ENCODE measurements at regions of chr3 and their contacts with region 1.

Region 1: DNA sequence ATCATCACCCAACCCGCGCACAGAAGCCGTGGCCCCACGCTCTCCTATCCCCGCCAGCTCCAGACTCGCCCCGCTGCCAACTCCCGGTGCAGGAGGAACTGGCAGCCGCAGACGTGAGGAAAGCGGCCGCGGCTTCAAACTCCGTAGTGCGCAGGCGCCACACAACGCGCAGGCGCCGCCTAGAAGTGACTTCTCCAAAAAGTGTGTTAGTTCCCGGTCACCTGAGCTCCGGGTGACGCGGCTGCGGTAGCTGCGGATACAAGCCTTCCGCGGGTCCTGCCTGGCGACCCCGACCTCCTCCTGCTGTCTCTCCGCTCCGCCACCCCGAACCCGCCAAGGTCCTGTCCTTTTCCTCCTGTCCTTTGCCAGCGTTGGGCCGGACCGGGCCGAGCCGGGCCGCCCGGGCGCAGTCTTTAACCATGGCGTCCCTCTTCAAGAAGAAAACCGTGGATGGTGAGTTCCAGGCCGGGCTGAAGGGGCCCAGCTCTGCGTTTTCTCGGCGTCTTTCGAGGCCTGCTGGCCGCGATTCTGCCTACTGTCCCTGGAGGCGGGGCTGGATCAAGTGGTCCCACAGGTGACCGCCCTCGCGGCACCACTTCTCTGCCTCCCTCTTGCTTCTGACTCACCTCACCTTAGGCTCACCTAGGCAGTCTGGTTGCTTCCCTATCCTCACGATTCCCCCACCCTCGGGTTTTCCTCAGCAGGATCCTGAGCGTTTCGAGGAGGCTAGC is at the start of gene CHMP2B:
- DNase-seq: peak; percentile 93
- H3K4me3 Mint-ChIP-seq: peak within 1 kb of the TSS; percentile 97
- H3K27ac Mint-ChIP-seq: peak within 1 kb of the TSS; percentile 99
- H3K4me1 Mint-ChIP-seq: peaks cover 29% of the 10 kb centered on the region
- H3K27me3 Mint-ChIP-seq: no peaks in the 10 kb centered on the region
- CTCF ChIP-seq: no peak
- total RNA-seq, gene CHMP2B: 45.5 and 62.2 TPM in 2 replicates

Region 2: GRCh38 chr3:87191641-87192040 is 35.6 kb before region 1 on chr3:
- CTCF ChIA-PET with region 1: no interaction called
- POLR2A ChIA-PET with region 1: interaction called, 10 read pairs
- intact Hi-C with region 1: no loop called
- DNase-seq: no peak
- H3K4me3 Mint-ChIP-seq: no peak overlapping the region
- H3K27ac Mint-ChIP-seq: no peak overlapping the region
- H3K4me1 Mint-ChIP-seq: no peaks in the 10 kb centered on the region
- H3K27me3 Mint-ChIP-seq: no peaks in the 10 kb centered on the region
- CTCF ChIP-seq: no peak

Region 3: DNA sequence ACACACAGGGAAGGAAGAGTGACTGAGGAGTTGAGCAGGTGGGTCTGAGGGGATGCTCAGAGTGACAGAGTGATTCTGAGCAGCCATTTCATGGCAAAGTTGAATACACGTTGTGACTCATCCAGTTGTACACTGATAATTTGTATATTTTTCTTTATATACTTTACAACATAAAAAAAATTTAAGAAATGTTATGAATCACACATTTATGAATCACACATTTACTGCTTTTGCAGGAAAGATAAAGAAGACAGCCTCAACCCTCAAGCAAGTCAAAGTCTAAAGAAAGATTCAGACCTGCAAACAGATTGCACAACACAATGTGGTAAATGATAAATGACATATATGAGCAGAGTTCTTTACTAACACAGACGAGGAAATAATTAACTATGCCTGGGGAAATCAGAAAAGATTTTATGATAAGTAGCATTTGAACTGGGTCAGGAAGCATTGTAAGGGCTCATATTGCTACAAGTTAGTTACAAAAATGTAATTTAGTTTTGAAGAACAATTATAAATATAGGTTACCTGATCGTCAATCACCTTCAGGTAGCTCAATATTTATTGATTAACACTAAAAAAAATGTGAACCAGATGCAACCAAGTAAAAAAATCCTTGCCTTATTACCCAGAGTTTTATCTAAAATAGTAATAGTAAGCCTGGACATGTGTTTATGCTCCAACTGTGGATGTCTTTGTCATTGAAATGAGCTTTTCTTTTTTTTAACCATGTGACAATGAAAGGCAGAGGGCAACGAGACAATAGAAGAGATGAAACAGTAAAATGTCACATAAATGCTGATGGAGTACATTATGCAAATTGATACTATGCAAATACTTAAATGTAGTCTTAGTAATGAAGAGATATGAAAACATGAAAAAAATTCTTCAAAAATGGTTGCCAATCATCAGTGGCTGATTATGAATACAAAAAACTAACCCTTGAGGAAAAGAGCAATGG is 20.9 kb before region 1 on chr3:
- CTCF ChIA-PET with region 1: interaction called, 3 read pairs
- POLR2A ChIA-PET with region 1: interaction called, 49 read pairs
- intact Hi-C with region 1: loop called (anchors 1 kb)
- DNase-seq: peak; percentile 84
- H3K4me3 Mint-ChIP-seq: no peak overlapping the region
- H3K27ac Mint-ChIP-seq: no peak overlapping the region
- H3K4me1 Mint-ChIP-seq: peaks cover 11% of the 10 kb centered on the region
- H3K27me3 Mint-ChIP-seq: no peaks in the 10 kb centered on the region
- CTCF ChIP-seq: no peak